Upper lobe of right lung (tissue), 1 donor: ENCODE measurements at regions of chr3 and their contacts with region 1.

Region 1: GRCh38 chr3:25604107-25604805 is 60.5 kb downstream of the TOP2B start:
- DNase-seq: no peak
- ATAC-seq: peak; percentile 87
- H3K4me3 ChIP-seq: no peak overlapping the region
- H3K27ac ChIP-seq: peak overlapping the region; percentile 9
- H3K4me1 ChIP-seq: peaks cover 13% of the 10 kb centered on the region
- H3K27me3 ChIP-seq: no peaks in the 10 kb centered on the region
- CTCF ChIP-seq: no peak

Region 2: GRCh38 chr3:24773798-24774197 is 830.5 kb before region 1 on chr3:
- intact Hi-C with region 1: loop called (anchors 10 kb)
- DNase-seq: peak; percentile 69
- ATAC-seq: peak; percentile 85
- H3K4me3 ChIP-seq: no peak overlapping the region
- H3K27ac ChIP-seq: no peak overlapping the region
- H3K4me1 ChIP-seq: no peaks in the 10 kb centered on the region
- H3K27me3 ChIP-seq: no peaks in the 10 kb centered on the region
- CTCF ChIP-seq: peak; percentile 77